Heart right ventricle (tissue), 16 donors: ENCODE measurements at regions of chr1 and their contacts with region 1.

Region 1: DNA sequence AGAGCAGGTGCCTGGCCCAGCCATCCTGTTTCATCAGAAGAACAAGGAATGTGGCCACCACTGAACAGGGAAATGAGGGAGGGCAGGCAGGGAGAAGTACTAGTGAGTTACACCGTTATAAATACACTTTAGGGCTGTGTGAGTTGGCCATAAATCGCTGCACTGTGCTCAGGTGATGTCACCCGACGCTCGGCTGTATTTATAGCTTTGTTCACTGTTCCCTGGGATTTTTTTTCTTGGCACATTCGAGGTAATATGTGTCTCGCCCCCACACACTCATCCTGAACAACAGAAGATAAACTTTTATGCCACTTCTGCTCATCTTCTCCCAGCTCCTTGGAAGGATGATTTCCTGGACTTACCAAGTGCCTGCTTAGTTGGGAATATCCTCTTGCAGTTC is 9.0 kb upstream of the KIRREL1 start:
- DNase-seq: no peak
- ATAC-seq: no peak
- H3K4me3 ChIP-seq: no peak overlapping the region
- H3K27ac ChIP-seq: no peak overlapping the region
- H3K4me1 ChIP-seq: no peaks in the 10 kb centered on the region
- H3K27me3 ChIP-seq: peaks cover 0 to 2% (median 0%) of the 10 kb centered on the region in 7 donors
- CTCF ChIP-seq: no peak

Region 2: DNA sequence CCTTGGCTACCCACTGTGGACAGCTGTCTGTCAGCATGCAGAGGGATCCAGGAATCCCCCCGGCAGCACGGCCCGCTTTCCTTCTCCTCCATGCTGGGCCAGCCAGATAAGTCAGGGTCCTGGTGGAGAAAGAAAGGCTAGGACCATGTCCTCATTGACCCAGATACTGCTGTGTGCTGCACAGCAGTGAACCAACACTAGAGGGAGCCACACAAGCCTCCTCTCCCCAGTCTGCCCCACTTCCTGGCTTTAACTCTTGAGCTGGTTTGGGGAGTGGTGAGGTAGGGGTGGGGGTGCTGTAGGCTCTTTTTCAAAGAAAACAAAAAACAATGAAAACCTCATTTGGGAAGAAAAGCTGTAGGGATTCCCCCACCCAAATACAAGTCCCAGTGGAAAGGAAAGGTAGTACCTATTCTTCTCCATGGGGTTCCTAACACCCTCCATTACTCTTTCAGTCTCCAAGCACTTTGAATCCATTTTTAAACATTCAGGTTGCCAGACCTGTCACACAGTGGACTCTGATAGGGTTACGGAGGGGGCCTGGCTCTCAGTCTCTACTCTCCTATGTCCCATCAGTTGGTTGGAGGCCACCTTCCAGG is 111.4 kb after region 1 on chr1:
- intact Hi-C with region 1: loop called in 1 of 10 experiments (anchors 10 kb)
- DNase-seq: no peak
- ATAC-seq: peak in 6 of 8 donors; percentile 43 to 62 (median 54)
- H3K4me3 ChIP-seq: no peak overlapping the region
- H3K27ac ChIP-seq: peak overlapping the region in 1 of 10 donors; percentile 10
- H3K4me1 ChIP-seq: peaks cover 0 to 16% (median 2%) of the 10 kb centered on the region in 9 donors
- H3K27me3 ChIP-seq: no peaks in the 10 kb centered on the region
- CTCF ChIP-seq: peak; percentile 40 to 77 (median 64)